ENCODE measurements at regions of chr2 and their contacts with region 1.

Region 1: DNA sequence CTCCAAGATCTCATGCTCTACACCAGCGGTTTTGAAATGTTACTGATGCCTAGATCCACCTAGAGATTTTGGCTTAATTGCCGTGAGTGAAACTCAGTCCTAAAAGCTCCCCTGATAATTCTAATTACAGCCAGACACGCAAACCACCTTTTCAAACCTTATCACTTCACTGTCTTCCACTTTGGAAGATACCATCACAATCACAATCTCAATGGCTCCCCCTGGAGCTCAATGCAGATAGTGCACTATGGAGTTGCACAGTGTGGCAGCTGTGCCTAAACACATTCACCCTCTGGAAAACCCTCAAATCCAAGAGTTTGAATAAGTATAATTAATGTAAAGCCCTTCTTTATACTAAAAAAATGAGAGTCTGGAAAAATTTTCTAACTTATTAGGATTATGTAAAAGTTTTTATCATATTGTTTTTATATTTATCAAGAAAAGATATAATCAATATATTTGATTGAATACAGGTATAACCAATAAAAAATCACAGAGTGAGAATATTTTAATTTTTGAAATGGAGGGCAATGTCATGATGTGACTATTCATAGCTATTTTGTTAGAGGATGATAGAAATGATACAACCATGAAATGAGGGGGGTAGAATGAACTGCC is 102.9 kb upstream of the SLC8A1 start:
- DNase-seq: peak; percentile 79
- H3K4me3 Mint-ChIP-seq: no peak overlapping the region
- H3K27ac Mint-ChIP-seq: no peak overlapping the region
- H3K4me1 Mint-ChIP-seq: peaks cover 6% of the 10 kb centered on the region
- H3K27me3 Mint-ChIP-seq: no peaks in the 10 kb centered on the region
- CTCF ChIP-seq: peak; percentile 88

Region 2: GRCh38 chr2:40212804-40213470 is 341.8 kb before region 1 on chr2:
- CTCF ChIA-PET with region 1: interaction called, 34 read pairs
- POLR2A ChIA-PET with region 1: no interaction called
- intact Hi-C with region 1: no loop called
- DNase-seq: peak; percentile 26
- H3K4me3 Mint-ChIP-seq: no peak overlapping the region
- H3K27ac Mint-ChIP-seq: no peak overlapping the region
- H3K4me1 Mint-ChIP-seq: no peaks in the 10 kb centered on the region
- H3K27me3 Mint-ChIP-seq: no peaks in the 10 kb centered on the region
- CTCF ChIP-seq: peak; percentile 25

Region 3: DNA sequence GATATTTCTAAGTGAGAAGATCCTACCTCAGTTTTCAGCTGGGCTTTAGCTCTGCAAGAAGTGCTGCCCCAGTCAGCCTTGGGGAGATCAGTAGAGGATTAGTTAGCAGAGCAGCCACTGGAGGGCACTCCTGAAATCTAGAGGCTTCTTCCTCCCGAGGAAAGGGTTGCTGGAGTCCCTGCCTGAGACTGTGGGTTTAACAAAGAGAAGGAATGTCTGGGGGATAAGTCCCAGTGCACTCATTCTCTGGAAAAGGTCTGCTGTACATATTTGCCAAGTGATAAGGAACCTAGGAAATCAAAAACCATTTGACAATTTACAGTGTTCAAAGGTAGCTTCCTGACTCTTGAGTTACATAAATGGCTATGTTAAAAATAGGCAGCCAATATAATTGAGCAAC is 310.1 kb before region 1 on chr2:
- CTCF ChIA-PET with region 1: interaction called, 71 read pairs
- POLR2A ChIA-PET with region 1: interaction called, 3 read pairs
- intact Hi-C with region 1: no loop called
- DNase-seq: peak; percentile 73
- H3K4me3 Mint-ChIP-seq: no peak overlapping the region
- H3K27ac Mint-ChIP-seq: no peak overlapping the region
- H3K4me1 Mint-ChIP-seq: peaks cover 5% of the 10 kb centered on the region
- H3K27me3 Mint-ChIP-seq: no peaks in the 10 kb centered on the region
- CTCF ChIP-seq: peak; percentile 30

Region 4: DNA sequence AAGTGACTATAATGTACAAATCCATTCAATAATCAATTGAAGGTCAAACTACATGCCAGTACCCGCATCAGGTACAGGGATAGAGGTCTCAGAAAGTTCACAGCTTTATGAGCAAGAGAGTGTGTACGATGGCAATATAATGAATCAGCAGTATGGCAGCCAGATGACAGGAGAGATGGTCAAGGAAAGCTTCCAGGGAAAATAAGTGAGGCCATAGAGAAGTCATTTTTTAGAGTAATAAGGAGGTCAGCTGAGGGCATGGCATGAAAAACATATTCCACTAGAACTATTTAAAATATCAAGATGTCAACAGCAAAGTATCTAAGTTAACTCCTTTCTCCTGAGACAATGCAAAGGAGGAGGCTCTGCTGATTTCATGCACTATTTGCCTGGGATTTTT is 210.9 kb before region 1 on chr2:
- CTCF ChIA-PET with region 1: no interaction called
- POLR2A ChIA-PET with region 1: no interaction called
- intact Hi-C with region 1: no loop called
- DNase-seq: peak; percentile 11
- H3K4me3 Mint-ChIP-seq: no peak overlapping the region
- H3K27ac Mint-ChIP-seq: no peak overlapping the region
- H3K4me1 Mint-ChIP-seq: peaks cover 6% of the 10 kb centered on the region
- H3K27me3 Mint-ChIP-seq: no peaks in the 10 kb centered on the region
- CTCF ChIP-seq: no peak

Region 5: DNA sequence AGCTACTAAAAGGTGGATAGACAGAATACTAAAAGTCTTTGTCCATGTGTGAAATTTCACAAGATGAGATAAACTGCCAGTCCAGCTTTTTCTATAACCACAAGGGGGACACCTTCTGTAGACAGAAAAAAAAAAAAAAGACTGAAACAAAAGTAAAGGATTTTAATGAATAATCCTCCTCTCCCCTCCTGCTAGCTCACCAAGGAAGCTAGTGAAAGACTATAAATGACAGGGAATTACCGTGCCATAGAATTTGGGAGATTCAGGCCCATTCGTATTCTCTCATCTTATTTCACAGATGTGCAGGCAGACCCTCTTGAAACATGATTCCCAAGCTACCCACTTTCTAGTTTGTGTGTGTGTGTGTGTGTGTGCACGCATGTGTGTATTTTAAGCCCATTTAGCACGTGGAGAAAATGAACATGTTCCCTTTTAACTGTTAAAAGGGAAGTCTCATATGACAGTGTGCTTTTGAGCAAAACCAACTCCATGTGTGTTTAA is 66.6 kb before region 1 on chr2:
- CTCF ChIA-PET with region 1: interaction called, 9 read pairs
- POLR2A ChIA-PET with region 1: no interaction called
- intact Hi-C with region 1: loop called (anchors 1 kb)
- DNase-seq: peak; percentile 51
- H3K4me3 Mint-ChIP-seq: no peak overlapping the region
- H3K27ac Mint-ChIP-seq: no peak overlapping the region
- H3K4me1 Mint-ChIP-seq: peaks cover 19% of the 10 kb centered on the region
- H3K27me3 Mint-ChIP-seq: no peaks in the 10 kb centered on the region
- CTCF ChIP-seq: peak; percentile 40

Region 6: GRCh38 chr2:40507432-40507831 is 47.3 kb before region 1 on chr2:
- CTCF ChIA-PET with region 1: no interaction called
- POLR2A ChIA-PET with region 1: no interaction called
- intact Hi-C with region 1: no loop called
- DNase-seq: no peak
- H3K4me3 Mint-ChIP-seq: no peak overlapping the region
- H3K27ac Mint-ChIP-seq: no peak overlapping the region
- H3K4me1 Mint-ChIP-seq: peaks cover 23% of the 10 kb centered on the region
- H3K27me3 Mint-ChIP-seq: no peaks in the 10 kb centered on the region
- CTCF ChIP-seq: no peak

Region 7: GRCh38 chr2:40760071-40760666 is 205.4 kb after region 1 on chr2:
- CTCF ChIA-PET with region 1: interaction called, 3 read pairs
- POLR2A ChIA-PET with region 1: no interaction called
- intact Hi-C with region 1: loop called (anchors 1 kb)
- DNase-seq: peak; percentile 64
- H3K4me3 Mint-ChIP-seq: no peak overlapping the region
- H3K27ac Mint-ChIP-seq: no peak overlapping the region
- H3K4me1 Mint-ChIP-seq: no peaks in the 10 kb centered on the region
- H3K27me3 Mint-ChIP-seq: no peaks in the 10 kb centered on the region
- CTCF ChIP-seq: peak; percentile 87

Region 8: DNA sequence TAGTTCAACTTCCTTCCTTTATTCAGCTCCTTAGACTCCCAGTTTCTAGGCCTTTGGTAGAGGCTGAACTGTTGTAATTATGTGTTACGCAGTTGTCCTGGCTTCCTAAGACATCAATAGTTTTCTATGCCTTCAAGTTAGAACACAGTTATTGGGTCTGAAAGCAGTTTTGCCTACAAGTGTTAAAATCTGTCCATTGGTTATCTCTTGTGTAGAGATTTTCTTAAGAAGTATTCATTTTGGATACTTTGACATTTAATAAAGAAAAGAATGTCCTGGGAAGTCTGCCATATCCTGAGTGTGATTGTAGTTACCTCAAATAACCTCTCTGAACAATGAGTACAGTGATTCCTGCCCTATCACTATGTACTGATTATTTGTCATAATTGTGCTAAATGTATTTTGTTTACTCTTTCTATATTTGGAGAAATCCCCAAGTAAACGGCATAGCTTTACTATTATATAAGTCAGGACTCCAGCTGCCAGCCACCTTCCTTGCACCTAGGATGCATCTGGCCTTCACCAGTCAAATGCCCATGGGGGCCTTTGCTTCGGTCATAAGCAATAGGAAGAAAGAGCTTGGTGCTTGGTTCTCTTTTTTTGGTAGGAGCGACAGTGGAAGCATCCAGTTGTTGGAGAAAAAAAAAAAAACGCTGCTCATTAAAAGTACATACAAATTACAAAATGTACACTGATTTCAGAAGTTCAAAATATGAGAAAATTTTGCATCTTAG is 1043.6 kb after region 1 on chr2:
- CTCF ChIA-PET with region 1: no interaction called
- POLR2A ChIA-PET with region 1: no interaction called
- intact Hi-C with region 1: no loop called
- DNase-seq: no peak
- H3K4me3 Mint-ChIP-seq: no peak overlapping the region
- H3K27ac Mint-ChIP-seq: no peak overlapping the region
- H3K4me1 Mint-ChIP-seq: peaks cover 21% of the 10 kb centered on the region
- H3K27me3 Mint-ChIP-seq: no peaks in the 10 kb centered on the region
- CTCF ChIP-seq: no peak

Measured in MCF 10A (cell line).